Prostate gland (tissue), 2 donors: ENCODE measurements at regions of chr10 and their contacts with region 1.

Region 1: GRCh38 chr10:118412932-118413331 is 70.8 kb upstream of the FAM204A start:
- DNase-seq: no peak
- H3K4me3 ChIP-seq: no peak overlapping the region
- H3K27ac ChIP-seq: no peak overlapping the region
- H3K4me1 ChIP-seq: no peaks in the 10 kb centered on the region
- H3K27me3 ChIP-seq: no peaks in the 10 kb centered on the region
- CTCF ChIP-seq: no peak
- POLR2A ChIP-seq: no peak

Region 2: GRCh38 chr10:117350909-117351308 is 1062.0 kb before region 1 on chr10:
- intact Hi-C with region 1: no loop called
- DNase-seq: no peak
- H3K4me3 ChIP-seq: no peak overlapping the region
- H3K27ac ChIP-seq: no peak overlapping the region
- H3K4me1 ChIP-seq: no peaks in the 10 kb centered on the region
- H3K27me3 ChIP-seq: no peaks in the 10 kb centered on the region
- CTCF ChIP-seq: no peak
- POLR2A ChIP-seq: no peak

Region 3: DNA sequence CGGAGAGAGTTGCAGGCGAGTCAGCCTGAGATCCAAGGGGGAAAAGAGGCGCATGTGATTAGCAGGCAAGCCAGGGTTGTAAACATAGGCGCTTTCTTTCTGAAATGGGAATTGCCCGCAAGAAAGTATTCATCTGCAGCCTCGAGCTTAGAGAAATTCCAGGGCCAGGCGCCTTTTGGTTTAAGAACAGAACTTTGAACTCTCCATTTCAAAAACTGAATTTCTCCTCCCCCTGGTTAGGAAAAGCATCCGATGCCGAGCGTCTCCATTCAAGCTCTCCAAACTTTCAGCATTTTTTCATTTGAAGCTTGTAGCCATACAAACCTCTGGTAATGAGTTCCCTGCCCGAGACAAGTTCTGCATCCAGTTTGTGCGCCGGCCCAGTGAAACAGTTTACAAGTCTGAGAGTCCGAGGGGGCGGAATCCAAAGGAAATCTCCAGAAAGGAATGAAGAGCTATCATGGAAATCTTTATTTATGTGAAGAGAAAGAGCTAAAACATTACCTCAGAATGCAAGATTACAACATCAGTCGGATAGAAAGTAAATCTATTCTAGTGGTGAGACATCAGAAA is 140.7 kb before region 1 on chr10:
- intact Hi-C with region 1: loop called (anchors 10 kb)
- DNase-seq: no peak
- H3K4me3 ChIP-seq: no peak overlapping the region
- H3K27ac ChIP-seq: no peak overlapping the region
- H3K4me1 ChIP-seq: no peaks in the 10 kb centered on the region
- H3K27me3 ChIP-seq: no peaks in the 10 kb centered on the region
- CTCF ChIP-seq: no peak
- POLR2A ChIP-seq: no peak

Region 4: DNA sequence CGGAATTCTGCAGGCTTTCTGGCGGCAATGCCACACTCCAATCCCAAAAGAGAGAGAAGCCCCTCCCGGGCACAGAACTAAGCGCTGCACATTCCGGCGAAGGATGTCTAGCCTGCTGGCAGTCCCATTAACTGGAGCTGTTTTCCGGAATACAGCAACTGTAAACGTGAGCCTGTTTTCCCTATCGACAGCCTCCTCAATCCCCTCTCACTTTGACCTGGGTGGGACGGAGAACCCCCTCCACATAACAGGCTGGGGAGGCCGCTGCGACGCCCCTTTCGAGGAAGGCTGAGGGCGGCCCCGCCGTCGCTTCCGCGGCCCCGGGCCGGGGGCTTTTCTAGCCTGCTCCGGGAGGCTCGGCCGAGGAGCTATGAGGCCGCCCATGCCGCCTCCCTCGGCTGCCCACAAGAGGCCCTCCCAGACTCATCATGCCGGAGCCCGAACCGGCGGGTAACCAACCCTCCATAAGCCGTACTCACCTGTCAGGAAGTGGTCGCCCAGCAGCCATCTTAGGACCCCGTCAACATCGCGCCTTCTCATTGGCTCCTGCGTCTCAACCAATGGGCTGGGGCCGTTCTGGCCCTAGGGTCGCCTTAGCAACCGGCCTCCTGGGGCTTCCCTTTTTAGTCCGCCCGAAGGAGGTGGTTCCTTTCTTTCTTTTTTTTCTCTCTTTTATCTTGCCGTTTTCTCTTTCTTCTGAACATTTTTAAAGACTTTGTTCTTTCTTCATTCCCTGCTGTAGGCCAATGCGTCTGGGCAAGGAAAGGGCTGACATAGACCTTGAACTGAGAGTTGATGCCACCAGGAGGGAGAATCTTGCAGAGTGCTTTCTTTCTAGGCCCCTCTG is 70.9 kb before region 1 on chr10 and contains the start of gene FAM204A:
- intact Hi-C with region 1: no loop called
- DNase-seq: peak; percentile 91
- H3K4me3 ChIP-seq: peak within 1 kb of the TSS; percentile 80 to 84
- H3K27ac ChIP-seq: peak within 1 kb of the TSS; percentile 61 to 71
- H3K4me1 ChIP-seq: no peaks in the 10 kb centered on the region
- H3K27me3 ChIP-seq: no peaks in the 10 kb centered on the region
- CTCF ChIP-seq: no peak
- POLR2A ChIP-seq: peak; percentile 61
- total RNA-seq, gene FAM204A: 35.8 to 57.2 TPM